MCF 10A (cell line): ENCODE measurements at regions of chr22 and their contacts with region 1.

Region 1: GRCh38 chr22:26330966-26331625 is 98.0 kb upstream of the ASPHD2 start:
- DNase-seq: peak; percentile 70
- H3K4me3 Mint-ChIP-seq: no peak overlapping the region
- H3K27ac Mint-ChIP-seq: no peak overlapping the region
- H3K4me1 Mint-ChIP-seq: no peaks in the 10 kb centered on the region
- H3K27me3 Mint-ChIP-seq: peaks cover 31% of the 10 kb centered on the region
- CTCF ChIP-seq: peak; percentile 96

Region 2: GRCh38 chr22:25772288-25772687 is 558.8 kb before region 1 on chr22:
- CTCF ChIA-PET with region 1: interaction called, 15 read pairs
- POLR2A ChIA-PET with region 1: no interaction called
- intact Hi-C with region 1: no loop called
- DNase-seq: no peak
- H3K4me3 Mint-ChIP-seq: no peak overlapping the region
- H3K27ac Mint-ChIP-seq: no peak overlapping the region
- H3K4me1 Mint-ChIP-seq: no peaks in the 10 kb centered on the region
- H3K27me3 Mint-ChIP-seq: no peaks in the 10 kb centered on the region
- CTCF ChIP-seq: no peak

Region 3: GRCh38 chr22:25853501-25854284 is 477.4 kb before region 1 on chr22:
- CTCF ChIA-PET with region 1: no interaction called
- POLR2A ChIA-PET with region 1: no interaction called
- intact Hi-C with region 1: loop called (anchors 2 kb)
- DNase-seq: peak; percentile 6
- H3K4me3 Mint-ChIP-seq: no peak overlapping the region
- H3K27ac Mint-ChIP-seq: no peak overlapping the region
- H3K4me1 Mint-ChIP-seq: no peaks in the 10 kb centered on the region
- H3K27me3 Mint-ChIP-seq: peaks cover 21% of the 10 kb centered on the region
- CTCF ChIP-seq: peak; percentile 21

Region 4: GRCh38 chr22:26086359-26086758 is 244.7 kb before region 1 on chr22:
- CTCF ChIA-PET with region 1: no interaction called
- POLR2A ChIA-PET with region 1: no interaction called
- intact Hi-C with region 1: loop called (anchors 5 kb)
- DNase-seq: no peak
- H3K4me3 Mint-ChIP-seq: no peak overlapping the region
- H3K27ac Mint-ChIP-seq: no peak overlapping the region
- H3K4me1 Mint-ChIP-seq: no peaks in the 10 kb centered on the region
- H3K27me3 Mint-ChIP-seq: peaks cover 6% of the 10 kb centered on the region
- CTCF ChIP-seq: no peak

Region 5: DNA sequence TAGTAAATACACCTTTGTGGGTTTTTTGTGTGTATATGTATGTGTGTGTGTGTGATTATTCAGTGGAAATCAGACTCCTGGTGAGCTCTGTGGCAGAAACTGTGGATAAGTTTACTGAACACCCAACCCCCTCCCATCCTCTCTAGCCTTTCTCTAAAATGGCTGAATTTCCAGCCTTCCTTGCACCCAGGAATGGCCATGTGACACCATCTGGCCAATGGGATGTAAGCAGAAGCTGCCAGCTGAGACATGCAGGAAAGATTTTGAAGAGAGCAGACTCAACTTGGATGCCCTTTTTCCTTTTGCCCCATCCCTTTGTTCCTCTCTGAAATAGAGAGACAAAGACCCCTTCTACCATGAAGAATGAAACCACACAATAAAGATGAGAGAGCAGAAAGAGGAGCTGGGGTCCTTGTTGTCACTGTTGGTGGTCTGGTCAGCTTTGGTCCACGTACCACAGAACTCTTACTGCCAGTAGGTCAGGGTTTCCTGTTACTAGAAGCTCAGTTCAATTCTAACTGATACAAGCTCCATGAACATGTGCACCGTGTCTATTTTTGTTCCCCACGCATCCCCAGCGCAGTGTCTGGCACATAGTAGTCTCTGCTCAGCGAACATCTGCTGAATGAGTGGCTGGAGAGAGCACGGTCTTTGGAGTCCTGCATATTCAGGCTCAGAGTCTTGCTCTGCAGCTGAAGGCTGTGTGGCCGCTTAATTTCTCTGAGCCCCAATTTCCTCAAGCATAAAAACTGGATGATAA is 104.4 kb before region 1 on chr22:
- CTCF ChIA-PET with region 1: no interaction called
- POLR2A ChIA-PET with region 1: no interaction called
- intact Hi-C with region 1: no loop called
- DNase-seq: no peak
- H3K4me3 Mint-ChIP-seq: no peak overlapping the region
- H3K27ac Mint-ChIP-seq: no peak overlapping the region
- H3K4me1 Mint-ChIP-seq: no peaks in the 10 kb centered on the region
- H3K27me3 Mint-ChIP-seq: peaks cover 30% of the 10 kb centered on the region
- CTCF ChIP-seq: no peak

Region 6: GRCh38 chr22:26259519-26259918 is 71.6 kb before region 1 on chr22:
- CTCF ChIA-PET with region 1: no interaction called
- POLR2A ChIA-PET with region 1: no interaction called
- intact Hi-C with region 1: loop called (anchors 1 kb)
- DNase-seq: peak; percentile 47
- H3K4me3 Mint-ChIP-seq: no peak overlapping the region
- H3K27ac Mint-ChIP-seq: no peak overlapping the region
- H3K4me1 Mint-ChIP-seq: no peaks in the 10 kb centered on the region
- H3K27me3 Mint-ChIP-seq: peaks cover 46% of the 10 kb centered on the region
- CTCF ChIP-seq: no peak

Region 7: GRCh38 chr22:26345496-26345895 is 14.4 kb after region 1 on chr22:
- CTCF ChIA-PET with region 1: interaction called, 31 read pairs
- POLR2A ChIA-PET with region 1: no interaction called
- intact Hi-C with region 1: no loop called
- DNase-seq: no peak
- H3K4me3 Mint-ChIP-seq: no peak overlapping the region
- H3K27ac Mint-ChIP-seq: no peak overlapping the region
- H3K4me1 Mint-ChIP-seq: no peaks in the 10 kb centered on the region
- H3K27me3 Mint-ChIP-seq: peaks cover 64% of the 10 kb centered on the region
- CTCF ChIP-seq: no peak

Region 8: GRCh38 chr22:26372890-26373289 is 41.8 kb after region 1 on chr22:
- CTCF ChIA-PET with region 1: no interaction called
- POLR2A ChIA-PET with region 1: no interaction called
- intact Hi-C with region 1: no loop called
- DNase-seq: no peak
- H3K4me3 Mint-ChIP-seq: no peak overlapping the region
- H3K27ac Mint-ChIP-seq: no peak overlapping the region
- H3K4me1 Mint-ChIP-seq: no peaks in the 10 kb centered on the region
- H3K27me3 Mint-ChIP-seq: peaks cover 69% of the 10 kb centered on the region
- CTCF ChIP-seq: no peak

Region 9: DNA sequence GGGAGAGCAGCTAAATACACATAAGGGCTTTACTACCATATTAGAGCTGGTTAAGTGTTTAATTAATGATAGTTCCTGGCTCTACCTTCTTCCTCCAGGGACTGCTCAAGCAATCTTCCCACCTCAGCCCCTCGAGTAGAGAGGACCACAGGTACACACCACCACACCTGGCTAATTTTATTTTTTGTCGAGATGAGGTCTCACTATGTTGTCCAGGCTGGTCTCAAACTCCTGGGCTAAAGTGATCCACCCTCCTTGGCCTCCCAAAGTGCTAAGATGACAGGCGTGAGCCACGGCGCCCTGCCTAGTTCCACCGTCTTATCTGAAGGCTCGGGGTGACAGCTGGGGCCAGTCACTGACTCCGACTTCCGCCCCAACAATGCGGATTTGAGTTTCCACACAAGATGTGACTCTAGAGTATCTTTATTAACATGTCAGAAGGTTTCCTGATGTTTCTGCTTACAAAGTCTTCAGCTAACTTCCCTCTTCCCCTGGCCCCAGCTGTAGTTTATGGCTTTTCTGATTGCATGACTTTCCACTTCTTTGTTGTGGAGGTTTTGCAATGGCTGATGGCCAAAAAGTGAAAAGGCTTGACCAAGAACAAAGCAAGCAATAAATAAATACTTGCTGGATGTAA is 242.0 kb after region 1 on chr22:
- CTCF ChIA-PET with region 1: no interaction called
- POLR2A ChIA-PET with region 1: no interaction called
- intact Hi-C with region 1: no loop called
- DNase-seq: no peak
- H3K4me3 Mint-ChIP-seq: no peak overlapping the region
- H3K27ac Mint-ChIP-seq: no peak overlapping the region
- H3K4me1 Mint-ChIP-seq: peaks cover 3% of the 10 kb centered on the region
- H3K27me3 Mint-ChIP-seq: no peaks in the 10 kb centered on the region
- CTCF ChIP-seq: no peak